Activated CD8-positive, alpha-beta memory T cell treated with anti-CD3 and anti-CD28 coated beads, Interleukin-2, amount 10 ng/mL, durations not matched to agents 7 days and 5 days (primary cell): ENCODE measurements at regions of chr3 and their contacts with region 1.

Region 1: GRCh38 chr3:194486540-194487288 is at the start of gene ATP13A3:
- DNase-seq: peak; percentile 90
- ATAC-seq: peak; percentile 85
- H3K4me3 Mint-ChIP-seq: peak within 1 kb of the TSS; percentile 92
- H3K27ac Mint-ChIP-seq: peak within 1 kb of the TSS; percentile 92
- H3K4me1 Mint-ChIP-seq: peaks cover 52% of the 10 kb centered on the region
- H3K27me3 Mint-ChIP-seq: no peaks in the 10 kb centered on the region
- total RNA-seq, gene ATP13A3: 78.3 to 82.0 TPM

Region 2: DNA sequence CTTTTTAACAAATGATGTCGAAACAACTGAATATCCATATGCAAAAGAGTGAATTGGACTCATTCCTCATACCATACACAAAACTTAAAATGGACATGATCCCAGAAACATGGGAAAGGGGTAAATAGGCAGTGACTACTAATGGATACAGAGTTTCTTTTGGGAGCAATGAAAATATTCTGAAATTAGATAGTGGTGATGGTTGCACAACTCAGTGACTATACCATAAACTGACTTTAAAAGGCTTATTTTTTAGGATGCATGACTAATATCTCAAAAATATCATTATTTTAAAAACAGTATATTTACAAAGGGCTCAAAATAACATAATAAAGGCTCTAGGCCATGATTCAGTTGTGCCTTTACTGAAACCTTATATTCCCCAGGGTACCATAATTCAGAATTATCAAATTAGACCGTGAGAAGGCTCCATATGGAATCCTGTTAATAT is 16.4 kb after region 1 on chr3:
- CTCF ChIA-PET with region 1: no interaction called
- DNase-seq: no peak
- ATAC-seq: no peak
- H3K4me3 Mint-ChIP-seq: no peak overlapping the region
- H3K27ac Mint-ChIP-seq: no peak overlapping the region
- H3K4me1 Mint-ChIP-seq: no peaks in the 10 kb centered on the region
- H3K27me3 Mint-ChIP-seq: no peaks in the 10 kb centered on the region

Region 3: GRCh38 chr3:194573691-194574437 is 87.2 kb after region 1 on chr3:
- CTCF ChIA-PET with region 1: interaction called, 19 read pairs
- DNase-seq: peak; percentile 54
- ATAC-seq: peak; percentile 85
- H3K4me3 Mint-ChIP-seq: no peak overlapping the region
- H3K27ac Mint-ChIP-seq: no peak overlapping the region
- H3K4me1 Mint-ChIP-seq: peaks cover 8% of the 10 kb centered on the region
- H3K27me3 Mint-ChIP-seq: peaks cover 30% of the 10 kb centered on the region

Region 4: DNA sequence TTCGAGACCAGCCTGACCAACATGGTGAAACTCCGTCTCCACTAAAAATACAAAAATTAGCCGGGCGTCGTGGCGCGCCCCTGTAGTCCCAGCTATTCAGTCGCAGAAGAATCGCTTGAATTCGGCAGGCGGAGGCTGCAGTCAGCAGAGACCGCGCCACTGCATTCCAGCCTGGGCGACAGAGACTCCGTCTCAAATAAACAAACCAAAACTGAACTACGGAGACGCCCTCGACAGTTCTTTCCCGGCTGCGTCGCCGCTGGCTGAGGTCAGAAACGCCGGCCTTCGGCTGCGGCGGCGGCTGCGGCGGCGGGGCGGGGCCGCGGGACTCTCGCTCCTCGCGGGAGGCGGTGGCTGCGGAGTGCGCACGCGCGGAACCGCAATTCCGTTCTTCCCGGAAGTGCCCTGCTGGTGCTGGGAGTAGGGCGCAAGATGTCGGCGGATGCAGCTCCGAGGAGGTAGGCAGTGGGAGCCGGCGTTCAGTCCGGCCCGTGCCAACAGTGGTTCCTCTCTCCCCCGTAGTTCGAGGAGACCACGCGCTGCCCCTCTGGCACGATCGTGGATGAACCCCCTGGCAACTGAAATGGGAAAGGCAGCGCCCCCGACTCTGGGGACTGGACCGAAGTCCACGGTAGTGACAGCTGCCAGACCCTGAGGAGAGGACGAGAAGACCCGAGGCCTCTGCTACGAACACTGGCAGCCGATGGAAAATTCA is 97.0 kb after region 1 on chr3:
- CTCF ChIA-PET with region 1: interaction called, 10 read pairs
- DNase-seq: peak; percentile 94
- ATAC-seq: peak; percentile 96
- H3K4me3 Mint-ChIP-seq: peak overlapping the region; percentile 92
- H3K27ac Mint-ChIP-seq: peak overlapping the region; percentile 96
- H3K4me1 Mint-ChIP-seq: peaks cover 31% of the 10 kb centered on the region
- H3K27me3 Mint-ChIP-seq: no peaks in the 10 kb centered on the region